ENCODE measurements at regions of chr2 and their contacts with region 1.

Region 1: GRCh38 chr2:233404222-233404621 is 49.9 kb downstream of the DGKD start:
- DNase-seq: peak; percentile 80
- ATAC-seq: peak; percentile 49
- H3K4me3 Mint-ChIP-seq: no peak overlapping the region
- H3K27ac Mint-ChIP-seq: peak overlapping the region; percentile 24
- H3K4me1 Mint-ChIP-seq: peaks cover 56% of the 10 kb centered on the region
- H3K27me3 Mint-ChIP-seq: no peaks in the 10 kb centered on the region

Region 2: GRCh38 chr2:233418761-233419625 is 14.8 kb after region 1 on chr2:
- CTCF ChIA-PET with region 1: interaction called, 102 read pairs
- POLR2A ChIA-PET with region 1: interaction called, 3 read pairs
- intact Hi-C with region 1: loop called in 1 of 2 experiments (anchors 2 kb)
- DNase-seq: peak; percentile 72
- ATAC-seq: peak; percentile 52
- H3K4me3 Mint-ChIP-seq: peak overlapping the region; percentile 63
- H3K27ac Mint-ChIP-seq: peak overlapping the region; percentile 81
- H3K4me1 Mint-ChIP-seq: peaks cover 97% of the 10 kb centered on the region
- H3K27me3 Mint-ChIP-seq: no peaks in the 10 kb centered on the region

Region 3: GRCh38 chr2:233426619-233427342 is 22.6 kb after region 1 on chr2:
- CTCF ChIA-PET with region 1: interaction called, 102 read pairs
- POLR2A ChIA-PET with region 1: no interaction called
- intact Hi-C with region 1: loop called in 1 of 2 experiments (anchors 2 kb)
- DNase-seq: peak; percentile 89
- ATAC-seq: peak; percentile 83
- H3K4me3 Mint-ChIP-seq: no peak overlapping the region
- H3K27ac Mint-ChIP-seq: peak overlapping the region; percentile 73
- H3K4me1 Mint-ChIP-seq: peaks cover 79% of the 10 kb centered on the region
- H3K27me3 Mint-ChIP-seq: no peaks in the 10 kb centered on the region

Region 4: GRCh38 chr2:233513953-233514655 is 109.9 kb after region 1 on chr2:
- CTCF ChIA-PET with region 1: interaction called, 10 read pairs
- POLR2A ChIA-PET with region 1: no interaction called
- intact Hi-C with region 1: no loop called
- DNase-seq: no peak
- ATAC-seq: no peak
- H3K4me3 Mint-ChIP-seq: no peak overlapping the region
- H3K27ac Mint-ChIP-seq: no peak overlapping the region
- H3K4me1 Mint-ChIP-seq: no peaks in the 10 kb centered on the region
- H3K27me3 Mint-ChIP-seq: no peaks in the 10 kb centered on the region

Region 5: DNA sequence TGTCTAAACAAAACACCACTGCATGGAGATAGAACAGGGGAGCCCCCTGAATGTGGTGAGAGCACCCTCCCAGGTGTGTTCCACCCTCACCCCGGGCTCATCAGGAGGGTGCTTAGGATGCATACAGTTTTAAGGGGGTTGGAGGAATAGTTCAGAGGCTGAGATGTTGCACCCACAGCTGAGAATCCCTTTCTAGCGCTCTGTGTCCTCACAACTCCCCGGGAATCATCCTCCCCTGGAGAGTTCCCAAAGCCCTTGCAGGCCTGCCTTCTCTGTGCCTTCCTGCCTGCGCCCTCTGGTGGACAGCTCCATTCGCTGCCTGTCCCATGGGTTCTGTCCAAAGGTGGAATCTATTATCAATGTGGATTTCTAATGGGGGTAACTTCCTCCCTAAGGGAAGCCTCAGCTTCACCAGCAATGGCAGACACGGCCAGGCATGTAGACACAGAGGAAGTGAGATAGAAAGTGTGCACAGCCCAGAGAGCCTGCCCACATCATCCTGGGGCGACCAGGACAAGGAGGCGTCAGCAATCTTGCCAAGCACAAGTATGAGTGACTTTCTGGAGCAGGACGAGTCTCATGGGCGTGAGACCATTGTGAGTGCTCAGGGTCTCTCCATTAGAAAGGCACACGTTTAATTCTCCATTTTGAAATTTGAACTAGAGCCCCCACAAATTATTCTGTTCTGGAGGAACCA is 307.2 kb after region 1 on chr2:
- CTCF ChIA-PET with region 1: no interaction called
- POLR2A ChIA-PET with region 1: no interaction called
- intact Hi-C with region 1: loop called (anchors 2 to 5 kb)
- DNase-seq: peak; percentile 86
- ATAC-seq: peak; percentile 61
- H3K4me3 Mint-ChIP-seq: no peak overlapping the region
- H3K27ac Mint-ChIP-seq: no peak overlapping the region
- H3K4me1 Mint-ChIP-seq: no peaks in the 10 kb centered on the region
- H3K27me3 Mint-ChIP-seq: peaks cover 25% of the 10 kb centered on the region